Endothelial cell of umbilical vein (primary cell): ENCODE measurements at regions of chr9 and their contacts with region 1.

Region 1: GRCh38 chr9:21252721-21253547 is 13.1 kb upstream of the IFNA14 start:
- DNase-seq: peak; percentile 79
- H3K4me3 ChIP-seq: no peak overlapping the region
- H3K27ac ChIP-seq: no peak overlapping the region
- H3K4me1 ChIP-seq: peaks cover 3% of the 10 kb centered on the region
- H3K27me3 ChIP-seq: peaks cover 34 to 51% of the 10 kb centered on the region in 2 experiments
- CTCF ChIP-seq: peak; percentile 29 to 48
- POLR2A ChIP-seq: no peak

Region 2: DNA sequence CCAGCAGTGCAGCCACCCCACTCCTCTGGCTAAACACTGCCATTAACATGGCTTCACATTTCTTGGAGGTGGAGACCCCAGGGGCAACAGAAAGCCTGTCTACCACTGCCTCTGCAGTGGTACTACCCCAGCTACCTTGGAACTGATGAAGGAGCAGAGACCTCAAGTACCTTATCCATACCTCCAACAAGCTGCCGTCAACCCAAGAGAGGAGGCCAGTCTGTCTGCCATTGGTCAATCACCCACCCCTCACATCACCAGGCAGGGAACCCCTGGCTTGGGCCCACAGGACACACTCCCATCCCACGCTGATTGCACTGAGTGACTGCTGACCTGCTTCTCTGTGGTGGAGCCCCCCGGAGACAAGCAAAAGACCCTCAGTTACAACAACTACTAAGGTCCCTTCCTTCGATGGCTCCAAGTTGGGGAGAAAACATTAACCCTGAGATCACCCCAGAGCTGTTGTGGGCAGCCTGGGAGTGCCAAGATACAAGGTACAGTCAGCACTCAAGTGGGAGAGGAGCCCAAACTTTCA is 18.7 kb before region 1 on chr9:
- CTCF ChIA-PET with region 1: interaction called, 39 read pairs
- POLR2A ChIA-PET with region 1: no interaction called
- dilution Hi-C with region 1: no loop called
- intact Hi-C with region 1: no loop called
- DNase-seq: no peak
- H3K4me3 ChIP-seq: no peak overlapping the region
- H3K27ac ChIP-seq: no peak overlapping the region
- H3K4me1 ChIP-seq: no peaks in the 10 kb centered on the region
- H3K27me3 ChIP-seq: peaks cover 2 to 4% of the 10 kb centered on the region in 2 experiments
- CTCF ChIP-seq: no peak
- POLR2A ChIP-seq: no peak

Region 3: GRCh38 chr9:21317956-21318923 is 65.3 kb after region 1 on chr9:
- CTCF ChIA-PET with region 1: interaction called, 9 read pairs
- POLR2A ChIA-PET with region 1: no interaction called
- dilution Hi-C with region 1: no loop called
- intact Hi-C with region 1: loop called (anchors 2 kb)
- DNase-seq: peak; percentile 76
- H3K4me3 ChIP-seq: no peak overlapping the region
- H3K27ac ChIP-seq: peak overlapping the region; percentile 20
- H3K4me1 ChIP-seq: peaks cover 13% of the 10 kb centered on the region
- H3K27me3 ChIP-seq: peaks cover 10 to 22% of the 10 kb centered on the region in 2 experiments
- CTCF ChIP-seq: peak; percentile 37 to 61
- POLR2A ChIP-seq: no peak

Region 4: GRCh38 chr9:21326526-21327139 is 73.7 kb after region 1 on chr9:
- CTCF ChIA-PET with region 1: interaction called, 13 read pairs
- POLR2A ChIA-PET with region 1: no interaction called
- dilution Hi-C with region 1: no loop called
- intact Hi-C with region 1: no loop called
- DNase-seq: peak; percentile 54
- H3K4me3 ChIP-seq: no peak overlapping the region
- H3K27ac ChIP-seq: no peak overlapping the region
- H3K4me1 ChIP-seq: peaks cover 15% of the 10 kb centered on the region
- H3K27me3 ChIP-seq: no peaks in the 10 kb centered on the region
- CTCF ChIP-seq: peak; percentile 33 to 46
- POLR2A ChIP-seq: no peak

Region 5: DNA sequence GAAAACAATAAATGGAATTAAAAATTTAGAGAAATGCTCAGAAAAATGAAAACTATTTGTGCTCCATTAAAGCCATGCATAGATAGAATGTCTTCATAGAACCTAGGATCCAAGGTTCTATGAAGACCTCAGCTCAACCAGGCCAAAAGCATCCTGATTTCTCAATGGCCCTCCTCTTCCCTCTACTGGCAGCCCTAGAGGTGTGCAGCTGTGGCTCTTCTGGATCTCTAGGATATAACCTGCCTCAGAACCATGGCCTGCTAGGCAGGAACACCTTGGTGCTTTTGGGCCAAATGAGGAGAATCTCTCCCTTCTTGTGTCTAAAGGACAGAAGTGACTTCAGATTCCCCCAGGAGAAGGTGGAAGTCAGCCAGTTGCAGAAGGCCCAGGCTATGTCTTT is 202.4 kb after region 1 on chr9:
- CTCF ChIA-PET with region 1: interaction called, 21 read pairs
- POLR2A ChIA-PET with region 1: no interaction called
- dilution Hi-C with region 1: no loop called
- intact Hi-C with region 1: no loop called
- DNase-seq: peak; percentile 24
- H3K4me3 ChIP-seq: no peak overlapping the region
- H3K27ac ChIP-seq: no peak overlapping the region
- H3K4me1 ChIP-seq: peaks cover 8% of the 10 kb centered on the region
- H3K27me3 ChIP-seq: no peaks in the 10 kb centered on the region
- CTCF ChIP-seq: peak; percentile 47 to 69
- POLR2A ChIP-seq: no peak